ENCODE measurements at regions of chr7 and their contacts with region 1.

Region 1: GRCh38 chr7:45890902-45891461 is 2.7 kb downstream of the IGFBP1 start:
- DNase-seq: peak; percentile 57
- H3K4me3 Mint-ChIP-seq: no peak overlapping the region
- H3K27ac Mint-ChIP-seq: no peak overlapping the region
- H3K4me1 Mint-ChIP-seq: peaks cover 10% of the 10 kb centered on the region
- H3K27me3 Mint-ChIP-seq: peaks cover 12% of the 10 kb centered on the region
- CTCF ChIP-seq: peak; percentile 67

Region 2: DNA sequence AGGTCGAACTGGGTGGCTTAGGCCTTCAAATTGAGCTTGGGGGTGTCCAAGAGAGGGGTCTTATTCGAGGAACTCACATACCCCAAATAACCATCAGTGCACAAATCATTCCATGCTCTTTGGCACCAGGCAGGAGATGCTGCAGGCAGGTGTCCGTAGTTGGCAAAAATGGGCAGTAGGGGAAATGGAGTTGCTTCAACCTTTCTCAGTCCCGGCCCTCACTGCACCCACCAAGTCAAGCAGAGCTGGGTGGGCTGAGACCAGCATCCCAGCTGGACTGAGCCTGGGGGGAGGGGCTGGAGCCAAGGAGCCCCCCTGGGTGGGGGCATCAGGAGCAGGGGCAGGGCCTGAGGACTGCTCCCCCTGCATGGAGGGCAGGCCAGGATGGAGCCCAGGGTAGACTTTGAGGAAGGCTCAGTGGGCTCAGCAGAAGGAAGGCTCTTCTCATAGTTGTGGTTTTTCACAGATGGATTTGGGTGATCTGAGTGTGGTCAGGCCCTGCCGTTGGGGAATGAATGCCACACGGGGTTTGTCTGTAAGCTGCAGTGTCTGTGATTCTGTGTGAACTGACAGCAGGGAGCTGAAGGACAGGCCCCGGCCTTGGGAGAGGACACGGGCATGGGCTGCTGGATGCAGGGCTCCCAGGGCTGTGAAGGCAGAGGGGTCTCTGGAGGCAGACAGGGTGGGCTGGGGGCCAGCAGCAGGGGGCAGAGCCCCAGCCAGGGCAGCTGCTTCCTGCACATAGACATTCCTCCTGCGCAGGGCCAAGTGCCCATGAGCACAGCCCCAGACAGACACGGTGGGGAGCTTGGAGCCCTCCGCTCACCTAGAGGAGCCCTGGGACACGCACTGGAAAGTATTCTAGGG is 172.3 kb before region 1 on chr7:
- CTCF ChIA-PET with region 1: no interaction called
- POLR2A ChIA-PET with region 1: no interaction called
- intact Hi-C with region 1: no loop called
- DNase-seq: no peak
- H3K4me3 Mint-ChIP-seq: no peak overlapping the region
- H3K27ac Mint-ChIP-seq: no peak overlapping the region
- H3K4me1 Mint-ChIP-seq: no peaks in the 10 kb centered on the region
- H3K27me3 Mint-ChIP-seq: peaks cover 23% of the 10 kb centered on the region
- CTCF ChIP-seq: no peak

Region 3: GRCh38 chr7:45938626-45939302 is 47.8 kb after region 1 on chr7:
- CTCF ChIA-PET with region 1: no interaction called
- POLR2A ChIA-PET with region 1: no interaction called
- intact Hi-C with region 1: no loop called
- DNase-seq: no peak
- H3K4me3 Mint-ChIP-seq: no peak overlapping the region
- H3K27ac Mint-ChIP-seq: no peak overlapping the region
- H3K4me1 Mint-ChIP-seq: no peaks in the 10 kb centered on the region
- H3K27me3 Mint-ChIP-seq: no peaks in the 10 kb centered on the region
- CTCF ChIP-seq: no peak

Region 4: GRCh38 chr7:46058086-46058823 is 167.3 kb after region 1 on chr7:
- CTCF ChIA-PET with region 1: no interaction called
- POLR2A ChIA-PET with region 1: no interaction called
- intact Hi-C with region 1: no loop called
- DNase-seq: peak; percentile 23
- H3K4me3 Mint-ChIP-seq: no peak overlapping the region
- H3K27ac Mint-ChIP-seq: no peak overlapping the region
- H3K4me1 Mint-ChIP-seq: no peaks in the 10 kb centered on the region
- H3K27me3 Mint-ChIP-seq: no peaks in the 10 kb centered on the region
- CTCF ChIP-seq: no peak

Region 5: GRCh38 chr7:47179812-47180515 is 1289.0 kb after region 1 on chr7:
- CTCF ChIA-PET with region 1: interaction called, 12 read pairs
- POLR2A ChIA-PET with region 1: no interaction called
- intact Hi-C with region 1: loop called (anchors 1 kb)
- DNase-seq: peak; percentile 76
- H3K4me3 Mint-ChIP-seq: no peak overlapping the region
- H3K27ac Mint-ChIP-seq: no peak overlapping the region
- H3K4me1 Mint-ChIP-seq: no peaks in the 10 kb centered on the region
- H3K27me3 Mint-ChIP-seq: peaks cover 20% of the 10 kb centered on the region
- CTCF ChIP-seq: peak; percentile 85

Region 6: DNA sequence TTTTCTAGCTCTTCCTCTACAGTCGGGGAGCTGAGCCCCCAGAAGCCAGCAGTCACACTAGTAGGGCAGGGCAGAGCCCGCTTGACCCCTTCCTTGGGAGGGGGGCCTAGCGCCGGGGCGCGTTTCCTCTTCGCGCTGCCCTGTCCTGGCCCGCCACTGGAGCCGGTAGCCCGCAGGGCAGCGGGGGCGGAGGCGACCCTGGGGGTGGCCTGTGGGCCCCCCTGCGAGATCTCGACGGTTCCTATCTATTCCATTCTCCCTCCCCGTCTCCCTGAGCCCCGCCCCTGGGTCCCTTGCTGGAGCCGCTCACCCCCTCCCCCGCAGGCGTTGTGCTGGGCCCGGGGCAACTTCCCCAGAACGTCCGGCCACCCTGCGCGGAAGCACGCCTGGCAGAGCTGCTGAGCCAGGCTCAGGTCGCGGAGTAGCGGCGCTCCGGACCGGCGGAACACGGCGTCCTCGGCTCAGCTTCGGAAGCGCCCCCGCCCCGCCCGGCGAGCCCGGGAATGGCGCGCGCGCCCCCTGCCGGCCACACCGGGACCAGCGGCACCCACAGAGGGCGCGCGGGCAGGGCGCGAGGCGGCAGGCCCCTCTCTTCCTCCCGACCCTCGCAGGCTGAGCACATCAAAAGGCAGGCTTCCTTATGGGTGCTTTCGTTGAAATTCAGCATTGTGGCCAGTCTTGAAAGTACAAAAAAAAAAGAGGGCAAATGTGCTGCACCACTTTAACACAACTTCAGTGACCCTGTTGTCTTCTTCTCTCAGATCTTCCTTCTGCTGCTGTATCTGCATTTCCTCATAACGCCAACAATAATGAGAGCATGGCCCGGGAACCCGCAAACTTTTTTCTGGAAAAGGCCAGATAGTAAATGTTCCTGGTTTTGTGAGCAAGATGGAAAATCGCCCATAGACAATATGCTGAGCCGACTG is 1363.4 kb after region 1 on chr7:
- CTCF ChIA-PET with region 1: interaction called, 3 read pairs
- POLR2A ChIA-PET with region 1: no interaction called
- intact Hi-C with region 1: loop called (anchors 2 kb)
- DNase-seq: peak; percentile 55
- H3K4me3 Mint-ChIP-seq: peak overlapping the region; percentile 67
- H3K27ac Mint-ChIP-seq: peak overlapping the region; percentile 14
- H3K4me1 Mint-ChIP-seq: peaks cover 6% of the 10 kb centered on the region
- H3K27me3 Mint-ChIP-seq: no peaks in the 10 kb centered on the region
- CTCF ChIP-seq: peak; percentile 88